Activated T-helper 1 cell treated with anti-CD3 and anti-CD28 coated beads, Interleukin-12 subunit alpha, Interleukin-12 subunit beta, Interleukin-2, Interleukin-4 antibody, amounts not matched to agents 30 ng/mL and 10 ng/mL and 1 ng/mL, durations not matched to agents 14 hours and 24 hours and 36 hours (primary cell): ENCODE measurements at regions of chr5 and their contacts with region 1.

Region 1: GRCh38 chr5:65324226-65324625 is 157.5 kb downstream of the ADAMTS6 start:
- DNase-seq: no peak
- H3K4me3 Mint-ChIP-seq: no peak overlapping the region
- H3K27ac Mint-ChIP-seq: no peak overlapping the region
- H3K4me1 Mint-ChIP-seq: no peaks in the 10 kb centered on the region
- H3K27me3 Mint-ChIP-seq: no peaks in the 10 kb centered on the region

Region 2: DNA sequence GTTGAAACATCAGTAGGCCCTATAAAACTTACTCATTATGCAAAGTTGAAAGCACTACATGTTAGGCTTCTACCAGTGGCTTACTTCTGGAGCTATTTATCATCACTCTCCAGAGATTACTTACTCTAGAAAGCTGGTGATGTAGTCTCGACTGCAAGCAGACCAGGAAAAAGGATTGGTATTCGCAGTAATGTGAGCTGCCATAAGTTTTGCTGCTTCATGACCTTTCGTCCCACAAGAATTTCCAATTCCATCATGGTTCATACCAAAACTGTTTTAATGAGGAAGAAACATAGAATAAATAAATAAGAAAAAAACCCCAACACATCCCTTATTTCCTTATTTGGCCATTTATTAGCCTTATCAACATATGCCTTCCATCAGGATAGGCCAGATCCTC is 24.4 kb before region 1 on chr5:
- intact Hi-C with region 1: loop called (anchors 1 kb)
- DNase-seq: no peak
- H3K4me3 Mint-ChIP-seq: no peak overlapping the region
- H3K27ac Mint-ChIP-seq: no peak overlapping the region
- H3K4me1 Mint-ChIP-seq: no peaks in the 10 kb centered on the region
- H3K27me3 Mint-ChIP-seq: no peaks in the 10 kb centered on the region